ENCODE measurements at regions of chr12 and their contacts with region 1.

Region 1: DNA sequence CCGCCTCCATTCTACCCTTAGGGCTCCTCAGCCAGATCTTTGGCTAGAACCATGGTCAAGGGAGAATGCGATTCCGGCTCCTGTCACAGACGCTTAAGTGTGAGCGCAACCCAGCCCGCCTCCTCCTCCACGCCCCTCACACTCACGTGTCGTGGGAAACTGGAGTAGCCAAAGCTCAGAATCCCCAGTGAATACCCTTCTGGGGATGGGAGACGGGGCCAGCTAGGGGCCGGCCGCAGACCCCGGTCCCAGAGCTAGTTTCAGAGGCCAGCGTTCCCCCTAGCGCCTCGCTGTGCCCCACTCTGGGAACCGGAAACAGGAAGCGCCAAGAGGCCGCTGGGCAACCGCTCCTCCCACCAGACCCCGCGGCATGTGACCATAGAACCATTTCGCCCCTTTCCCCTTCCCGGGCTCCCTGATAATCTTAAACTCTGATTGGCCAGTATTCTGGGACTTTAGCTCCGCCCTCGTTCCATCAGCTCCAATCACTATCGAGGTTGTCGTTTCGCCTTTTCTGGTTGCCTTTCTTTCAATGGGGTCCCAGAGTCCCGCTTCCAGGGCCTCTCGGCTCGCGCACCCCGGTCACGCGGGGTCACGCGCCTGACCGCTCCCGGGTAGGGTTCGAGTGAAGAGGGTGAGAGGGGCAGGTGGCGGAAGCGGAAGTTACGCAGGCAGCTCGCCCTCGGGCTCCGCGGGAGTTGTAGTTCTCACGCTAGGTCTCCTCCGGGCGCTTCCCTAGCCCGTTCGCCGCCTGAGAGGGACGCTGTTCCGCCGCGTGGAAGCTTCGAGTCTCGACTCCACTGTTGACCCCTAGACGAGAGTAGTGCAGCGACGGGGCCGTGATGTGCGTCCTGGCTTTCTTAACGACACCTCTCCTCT is at the start of gene M6PR:
- DNase-seq: peak; percentile 91 to 94 (median 92)
- H3K4me3 ChIP-seq: peak within 1 kb of the TSS; percentile 91
- H3K27ac ChIP-seq: peak within 1 kb of the TSS; percentile 96 to 99
- H3K4me1 ChIP-seq: peaks cover 3% of the 10 kb centered on the region
- H3K27me3 ChIP-seq: no peaks in the 10 kb centered on the region
- CTCF ChIP-seq: peak; percentile 31 to 49 (median 36)
- EP300 ChIP-seq: no peak
- POLR2A ChIP-seq: peak; percentile 71
- total RNA-seq, gene M6PR: 58.2 to 133 (median 101) TPM

Region 2: DNA sequence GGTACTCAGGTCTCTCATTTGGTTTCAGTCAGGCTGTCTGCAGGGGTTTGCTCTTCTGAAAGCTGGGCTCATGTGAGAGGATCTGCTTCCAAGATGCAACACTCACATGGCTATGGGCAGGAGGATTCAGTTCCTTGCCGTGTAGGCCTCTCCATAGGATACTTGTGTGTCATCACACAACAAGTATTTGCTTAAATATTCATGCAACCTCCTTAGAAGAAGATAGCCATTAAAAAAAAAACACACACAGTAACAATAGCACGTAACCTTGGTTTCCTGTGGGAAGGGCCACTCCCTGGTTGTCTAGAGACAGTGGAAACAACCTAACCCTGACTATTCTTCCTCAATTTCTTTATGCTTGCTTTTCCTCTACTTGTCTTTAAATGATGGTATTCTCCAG is 377.1 kb before region 1 on chr12:
- intact Hi-C with region 1: no loop called
- DNase-seq: no peak
- H3K4me3 ChIP-seq: no peak overlapping the region
- H3K27ac ChIP-seq: no peak overlapping the region
- H3K4me1 ChIP-seq: no peaks in the 10 kb centered on the region
- H3K27me3 ChIP-seq: no peaks in the 10 kb centered on the region
- CTCF ChIP-seq: no peak
- EP300 ChIP-seq: no peak
- POLR2A ChIP-seq: no peak

Region 3: DNA sequence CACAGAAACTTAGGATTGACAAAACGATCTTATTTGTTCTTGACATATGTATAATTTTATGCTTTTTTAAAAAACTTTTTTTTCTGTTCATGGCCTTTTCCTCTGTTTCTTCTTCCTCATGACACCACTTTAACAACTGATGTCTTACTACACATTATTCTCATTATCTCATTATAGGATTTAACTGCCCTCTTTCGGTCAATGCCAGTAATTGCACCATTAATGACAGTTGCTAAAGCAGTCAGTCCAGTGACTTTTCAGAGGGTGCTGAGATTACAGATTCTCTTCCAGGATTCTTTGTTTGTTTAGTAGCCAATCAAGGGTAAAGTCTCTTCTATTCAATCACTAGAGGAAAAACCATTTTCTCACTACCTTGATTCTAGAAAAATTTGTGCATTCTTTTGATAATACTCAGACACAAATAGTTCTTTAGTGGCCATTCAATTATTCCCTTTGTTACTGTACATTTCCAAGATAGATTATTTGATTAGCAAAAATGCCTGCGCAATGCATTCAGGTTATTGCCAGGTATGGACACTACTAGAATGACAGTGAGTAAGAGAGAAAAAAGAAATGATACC is 89.9 kb after region 1 on chr12:
- intact Hi-C with region 1: loop called in 2 of 4 experiments (anchors 10 kb)
- DNase-seq: peak in 1 of 5 donors; percentile 25
- H3K4me3 ChIP-seq: no peak overlapping the region
- H3K27ac ChIP-seq: no peak overlapping the region
- H3K4me1 ChIP-seq: no peaks in the 10 kb centered on the region
- H3K27me3 ChIP-seq: no peaks in the 10 kb centered on the region
- CTCF ChIP-seq: peak; percentile 32 to 70 (median 58)
- EP300 ChIP-seq: no peak
- POLR2A ChIP-seq: no peak

Region 4: DNA sequence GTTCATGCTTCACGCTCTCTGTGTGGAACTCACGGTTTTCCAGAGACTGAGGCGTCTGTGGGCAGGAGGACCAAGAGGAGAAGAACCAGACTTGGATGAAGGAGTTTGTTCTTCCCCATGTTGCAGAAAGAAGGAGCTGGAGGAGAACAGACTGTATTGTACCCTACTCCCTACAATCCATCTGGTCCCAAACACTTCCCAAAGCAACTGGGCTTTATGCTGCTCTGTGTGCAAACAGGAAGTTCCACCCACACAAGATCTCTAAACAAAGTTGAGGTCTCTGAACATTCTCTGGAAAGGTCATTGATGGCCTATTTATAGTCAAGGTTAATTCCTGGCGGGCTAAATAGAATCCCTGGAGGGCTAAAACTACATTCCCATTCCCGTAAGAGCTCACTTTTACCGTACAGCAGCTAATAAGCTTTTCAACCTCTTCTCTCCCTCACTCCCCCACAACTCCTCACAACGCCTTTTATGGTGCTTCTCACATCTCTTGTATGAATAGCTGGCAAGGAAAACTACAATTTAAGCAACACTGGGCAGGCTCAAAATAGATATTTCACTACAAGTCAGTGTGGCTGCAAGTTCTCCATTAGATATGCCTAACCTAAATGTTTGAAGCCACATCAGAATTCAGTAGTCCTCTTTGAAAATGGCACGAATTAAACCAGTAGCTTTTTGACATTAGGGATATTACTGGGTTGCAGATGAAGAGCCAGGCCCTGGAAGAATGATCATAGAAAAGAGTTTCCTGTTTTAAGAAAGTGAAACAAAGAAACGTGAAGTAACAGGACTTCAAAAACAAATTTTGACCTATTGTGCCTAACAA is 166.4 kb after region 1 on chr12 and contains the start of gene A2M:
- intact Hi-C with region 1: no loop called
- DNase-seq: peak in 1 of 5 donors; percentile 31
- H3K4me3 ChIP-seq: peak within 1 kb of the TSS; percentile 34
- H3K27ac ChIP-seq: peak within 1 kb of the TSS in 1 of 2 donors; percentile 18
- H3K4me1 ChIP-seq: no peaks in the 10 kb centered on the region
- H3K27me3 ChIP-seq: no peaks in the 10 kb centered on the region
- CTCF ChIP-seq: no peak
- EP300 ChIP-seq: peak; percentile 82
- POLR2A ChIP-seq: no peak
- total RNA-seq, gene A2M: 50.5 to 426 (median 222) TPM

Region 5: GRCh38 chr12:9243999-9244649 is 294.5 kb after region 1 on chr12:
- intact Hi-C with region 1: no loop called
- DNase-seq: no peak
- H3K4me3 ChIP-seq: no peak overlapping the region
- H3K27ac ChIP-seq: no peak overlapping the region
- H3K4me1 ChIP-seq: no peaks in the 10 kb centered on the region
- H3K27me3 ChIP-seq: no peaks in the 10 kb centered on the region
- CTCF ChIP-seq: no peak
- EP300 ChIP-seq: no peak
- POLR2A ChIP-seq: no peak